Head of caudate nucleus (tissue), 42 donors: ENCODE measurements at regions of chr4 and their contacts with region 1.

Region 1: GRCh38 chr4:153142700-153143438 is 61.4 kb upstream of the TRIM2 start:
- DNase-seq: peak; percentile 57 to 92 (median 81)

Region 2: GRCh38 chr4:153198719-153199118 is 55.9 kb after region 1 on chr4:
- intact Hi-C with region 1: no loop called
- DNase-seq: no peak

Region 3: DNA sequence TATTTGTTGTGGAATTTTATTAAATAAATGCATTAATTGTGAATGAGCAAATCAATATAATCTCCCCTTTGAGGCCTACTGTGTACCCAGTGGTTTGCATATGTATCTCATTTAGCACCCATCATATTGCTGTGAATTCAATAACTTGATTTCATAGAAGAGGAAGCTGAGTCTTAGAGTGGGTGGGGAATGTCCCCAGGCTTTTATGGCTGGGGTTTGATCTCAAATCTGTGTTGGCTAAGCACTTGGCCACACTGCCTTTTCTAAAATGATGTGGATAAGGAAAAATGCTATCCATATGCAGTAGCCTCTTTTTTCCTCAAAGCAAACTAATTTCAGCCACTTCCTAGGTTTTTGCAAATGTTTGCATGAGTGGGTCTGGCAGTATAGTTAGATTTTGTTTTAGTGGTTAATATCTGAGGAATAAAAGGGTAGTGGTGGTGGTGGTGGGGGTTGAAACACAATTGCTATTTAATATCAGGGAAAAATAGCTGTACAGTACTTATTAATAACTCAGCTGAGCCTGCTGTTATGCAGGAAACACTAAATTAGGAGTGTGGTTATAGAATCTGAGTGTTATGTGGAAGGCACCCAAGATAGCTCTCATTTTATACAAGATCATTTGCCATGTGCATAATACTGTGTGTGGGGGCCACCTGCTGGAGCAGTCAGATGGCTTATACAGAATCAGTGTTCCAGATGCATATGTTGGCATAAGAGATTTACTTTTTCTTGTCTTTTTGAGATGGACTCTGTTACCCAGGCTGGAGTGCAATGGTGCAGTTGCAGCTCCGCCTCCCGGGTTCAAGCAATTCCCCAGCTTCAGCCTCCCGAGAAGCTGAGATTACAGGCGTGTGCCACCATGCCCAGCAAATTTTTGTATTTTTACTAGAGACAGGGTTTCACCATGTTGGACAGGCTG is 431.3 kb after region 1 on chr4:
- intact Hi-C with region 1: loop called (anchors 10 kb)
- DNase-seq: peak; percentile 56 to 94 (median 80)